Mammary epithelial cell (primary cell): ENCODE measurements at regions of chr9 and their contacts with region 1.

Region 1: DNA sequence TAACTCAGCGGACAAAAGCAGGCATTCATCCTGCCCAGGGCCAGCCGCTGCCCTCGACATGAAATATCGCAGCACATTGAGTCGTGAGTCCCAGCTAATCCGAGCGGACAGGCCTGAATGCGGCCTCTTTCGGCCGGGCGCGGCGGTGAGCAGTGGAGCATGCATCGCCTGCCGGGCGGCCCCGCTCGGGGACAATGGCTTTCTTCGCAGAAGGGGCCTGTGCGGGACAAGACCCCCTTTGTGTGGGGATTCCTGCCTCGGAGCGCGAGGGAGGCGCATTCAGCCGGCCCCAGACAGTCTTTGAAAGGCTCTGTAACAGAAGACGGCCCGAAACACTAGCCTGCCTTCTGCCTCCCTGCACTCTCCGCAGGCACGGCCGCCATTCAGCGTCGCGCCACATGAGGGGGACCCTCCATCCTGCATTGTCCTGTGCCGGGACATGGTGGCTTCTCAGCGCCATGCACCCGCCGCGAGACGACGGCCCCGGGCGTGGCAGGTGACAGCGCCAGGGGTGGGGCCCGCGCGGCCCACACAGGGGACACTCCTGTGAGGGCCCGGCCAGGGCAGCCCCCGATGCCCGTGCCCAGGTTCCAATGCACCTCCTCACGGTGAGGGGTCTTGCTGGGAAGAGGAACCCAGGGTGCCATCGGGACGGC is 52.0 kb downstream of the EXD3 start:
- DNase-seq: no peak
- H3K4me3 ChIP-seq: no peak overlapping the region
- H3K27ac ChIP-seq: no peak overlapping the region
- H3K4me1 ChIP-seq: no peaks in the 10 kb centered on the region
- H3K27me3 ChIP-seq: no peaks in the 10 kb centered on the region
- CTCF ChIP-seq: no peak

Region 2: GRCh38 chr9:137280474-137281344 is 90.3 kb before region 1 on chr9:
- CTCF ChIA-PET with region 1: no interaction called
- dilution Hi-C with region 1: loop called (anchors 5 kb)
- in situ Hi-C with region 1: no loop called
- intact Hi-C with region 1: no loop called
- DNase-seq: no peak
- H3K4me3 ChIP-seq: peak overlapping the region in 1 of 3 experiments; percentile 27
- H3K27ac ChIP-seq: no peak overlapping the region
- H3K4me1 ChIP-seq: peaks cover 13% of the 10 kb centered on the region
- H3K27me3 ChIP-seq: peaks cover 5% of the 10 kb centered on the region
- CTCF ChIP-seq: peak; percentile 10 to 48

Region 3: DNA sequence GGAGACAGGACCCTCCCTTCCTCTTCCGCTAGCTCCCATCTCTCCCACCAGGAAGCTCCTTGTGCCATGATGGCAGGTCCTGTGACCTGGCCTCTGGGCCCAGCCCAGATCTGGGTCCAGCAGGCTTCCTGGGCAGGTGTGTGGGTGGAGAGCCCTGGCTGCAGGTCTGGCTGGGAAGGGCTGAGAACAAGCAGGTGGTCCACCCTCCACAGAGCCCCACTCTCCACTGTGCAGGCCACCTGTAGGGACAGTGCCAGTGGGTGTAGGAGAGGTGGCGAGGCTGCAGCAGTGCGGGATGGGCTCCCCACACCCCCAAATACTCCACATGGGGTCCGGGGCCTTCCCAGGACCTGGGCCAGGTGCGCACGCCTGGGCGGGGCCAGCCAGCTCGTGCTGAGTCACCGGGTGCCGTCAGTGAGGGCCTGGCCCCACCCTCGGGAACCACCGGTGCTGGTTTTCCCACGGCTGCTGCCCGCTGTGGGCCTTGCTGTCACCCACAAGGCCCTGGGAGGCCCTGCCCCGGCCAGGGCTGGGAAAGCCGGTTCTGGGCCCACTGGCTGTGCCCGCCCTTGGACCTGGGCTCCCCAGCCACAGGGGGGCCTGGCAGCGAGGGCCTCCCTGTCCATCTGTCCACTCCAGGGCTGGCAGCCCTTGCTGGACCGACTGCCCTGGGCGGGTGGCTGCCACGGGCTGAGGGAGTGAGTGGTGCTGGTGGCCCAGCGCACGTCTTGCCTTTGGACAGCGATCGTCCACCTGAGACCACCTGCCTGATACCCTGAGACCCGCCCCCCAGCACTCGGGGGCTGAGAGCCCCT is 59.6 kb before region 1 on chr9:
- CTCF ChIA-PET with region 1: no interaction called
- dilution Hi-C with region 1: loop called (anchors 5 kb)
- in situ Hi-C with region 1: no loop called
- intact Hi-C with region 1: no loop called
- DNase-seq: peak; percentile 95
- H3K4me3 ChIP-seq: no peak overlapping the region
- H3K27ac ChIP-seq: peak overlapping the region; percentile 45
- H3K4me1 ChIP-seq: peaks cover 23% of the 10 kb centered on the region
- H3K27me3 ChIP-seq: no peaks in the 10 kb centered on the region
- CTCF ChIP-seq: no peak

Region 4: GRCh38 chr9:137406876-137407589 is 36.0 kb after region 1 on chr9:
- CTCF ChIA-PET with region 1: no interaction called
- dilution Hi-C with region 1: loop called (anchors 5 kb)
- in situ Hi-C with region 1: no loop called
- intact Hi-C with region 1: no loop called
- DNase-seq: peak; percentile 17
- H3K4me3 ChIP-seq: no peak overlapping the region
- H3K27ac ChIP-seq: no peak overlapping the region
- H3K4me1 ChIP-seq: peaks cover 23% of the 10 kb centered on the region
- H3K27me3 ChIP-seq: peaks cover 4% of the 10 kb centered on the region
- CTCF ChIP-seq: peak; percentile 30 to 49

Region 5: DNA sequence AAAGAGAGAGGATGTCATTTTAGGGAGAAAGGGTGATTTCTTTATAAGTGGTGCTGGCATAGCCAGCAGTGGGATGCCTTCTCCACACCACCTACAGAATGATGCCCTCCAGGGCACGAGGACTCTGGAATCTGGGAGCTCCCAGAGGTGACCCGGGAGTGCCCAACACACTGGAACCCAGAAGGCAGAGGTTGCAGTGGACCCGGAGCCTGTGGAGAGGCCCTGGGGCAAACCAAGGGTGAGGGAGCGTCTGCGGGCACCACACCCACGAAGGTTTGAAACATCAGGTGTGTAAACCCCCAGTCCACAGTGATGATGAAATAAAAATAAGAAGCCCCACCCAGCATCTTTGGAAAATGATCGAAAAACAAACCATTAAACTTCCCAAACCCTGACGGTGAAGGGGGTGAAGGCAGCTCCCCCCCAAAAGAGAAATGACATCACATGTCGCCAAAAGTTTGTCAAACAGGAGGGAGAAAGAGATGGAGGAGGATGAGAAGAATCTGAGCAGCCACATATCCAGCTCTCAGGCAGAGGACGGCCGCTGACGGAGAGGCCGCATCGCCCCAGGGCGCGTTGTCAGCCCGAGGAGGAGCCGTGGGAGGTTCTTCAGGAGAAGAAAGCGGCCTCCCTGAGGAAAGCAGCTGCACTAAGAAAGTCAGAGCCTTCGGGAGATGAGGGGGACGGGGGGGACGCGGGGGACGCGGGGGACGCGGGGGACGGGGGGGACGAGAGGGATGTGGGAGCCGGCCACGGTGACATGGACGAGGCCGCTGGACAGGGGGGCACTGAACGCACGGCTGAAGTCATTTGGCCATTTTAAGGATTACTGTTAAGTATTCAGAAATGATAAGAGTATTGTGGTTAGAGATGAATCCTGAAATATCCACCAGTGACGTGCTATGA is 131.3 kb after region 1 on chr9:
- CTCF ChIA-PET with region 1: no interaction called
- dilution Hi-C with region 1: loop called (anchors 5 kb)
- in situ Hi-C with region 1: no loop called
- intact Hi-C with region 1: no loop called
- DNase-seq: no peak
- H3K4me3 ChIP-seq: no peak overlapping the region
- H3K27ac ChIP-seq: no peak overlapping the region
- H3K4me1 ChIP-seq: no peaks in the 10 kb centered on the region
- H3K27me3 ChIP-seq: no peaks in the 10 kb centered on the region
- CTCF ChIP-seq: no peak